K562 (cell line): ENCODE measurements at regions of chr6 and their contacts with region 1.

Region 1: DNA sequence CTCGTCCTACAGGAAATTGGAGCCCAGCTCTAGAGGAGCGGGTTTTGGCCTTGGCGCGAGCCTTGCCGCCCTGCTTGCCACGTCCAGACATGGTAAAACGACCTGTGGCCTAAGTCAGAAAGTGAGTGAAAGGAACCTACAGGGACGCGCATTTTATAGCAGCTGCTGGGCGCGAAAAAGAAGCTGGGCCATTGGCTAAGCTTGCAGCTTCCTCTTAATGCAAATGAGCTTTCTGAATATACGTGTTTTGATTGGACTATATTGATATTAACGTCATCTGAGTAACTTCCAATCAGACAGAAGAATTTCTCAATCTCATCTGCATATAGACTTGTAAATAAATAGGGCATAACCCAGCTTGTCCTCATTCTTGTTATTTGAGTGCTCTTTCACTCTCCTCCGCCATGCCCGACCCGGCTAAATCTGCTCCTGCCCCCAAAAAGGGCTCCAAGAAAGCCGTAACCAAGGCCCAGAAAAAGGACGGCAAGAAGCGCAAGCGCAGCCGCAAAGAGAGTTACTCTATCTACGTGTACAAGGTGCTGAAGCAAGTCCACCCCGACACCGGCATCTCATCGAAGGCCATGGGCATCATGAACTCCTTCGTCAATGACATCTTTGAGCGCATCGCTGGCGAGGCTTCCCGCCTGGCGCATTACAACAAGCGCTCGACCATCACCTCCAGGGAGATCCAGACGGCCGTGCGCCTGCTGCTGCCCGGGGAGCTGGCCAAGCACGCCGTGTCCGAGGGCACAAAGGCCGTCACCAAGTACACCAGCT is 18.9 kb downstream of the OR2B2 start:
- DNase-seq: peak; percentile 84 to 99 (median 92)
- ATAC-seq: peak; percentile 71
- H3K4me3 ChIP-seq: peak overlapping the region; percentile 79
- H3K27ac ChIP-seq: peak overlapping the region; percentile 95
- H3K4me1 ChIP-seq: peaks cover 19 to 38% of the 10 kb centered on the region in 2 experiments
- H3K27me3 ChIP-seq: no peaks in the 10 kb centered on the region
- CTCF ChIP-seq: peak in 1 of 3 experiments; percentile 14; a peak in 1 of 6 replicates
- EP300 ChIP-seq: peak; percentile 62; the same call in 1 of the 2 replicates
- POLR2A ChIP-seq: peak; percentile 100
- RAD21 ChIP-seq: no peak

Region 2: GRCh38 chr6:26122793-26123674 is 1770.2 kb before region 1 on chr6:
- CTCF ChIA-PET with region 1: no interaction called
- POLR2A ChIA-PET with region 1: interaction called, 4 read pairs
- in situ Hi-C with region 1: no loop called
- intact Hi-C with region 1: loop called (anchors 10 kb)
- DNase-seq: peak; percentile 79 to 99 (median 86)
- ATAC-seq: peak; percentile 62
- H3K4me3 ChIP-seq: peak overlapping the region; percentile 72
- H3K27ac ChIP-seq: peak overlapping the region; percentile 95
- H3K4me1 ChIP-seq: peaks cover 3 to 7% of the 10 kb centered on the region in 2 experiments; a peak in 4 of 5 replicates
- H3K27me3 ChIP-seq: no peaks in the 10 kb centered on the region
- CTCF ChIP-seq: peak in 1 of 3 experiments; percentile 23; a peak in 1 of 6 replicates
- EP300 ChIP-seq: peak; percentile 99
- POLR2A ChIP-seq: no peak; the same call in none of the 2 replicates
- RAD21 ChIP-seq: 0 out of 4 replicates have a peak, but pooled peaks of 1 of the 2 experiments have one; percentile 6

Region 3: GRCh38 chr6:27146706-27147505 is 746.3 kb before region 1 on chr6:
- CTCF ChIA-PET with region 1: no interaction called
- POLR2A ChIA-PET with region 1: interaction called, 134 read pairs
- in situ Hi-C with region 1: loop called (anchors 5 kb)
- intact Hi-C with region 1: loop called (anchors 1 kb)
- DNase-seq: peak; percentile 93 to 99 (median 98)
- ATAC-seq: peak; percentile 68
- H3K4me3 ChIP-seq: peak overlapping the region; percentile 71
- H3K27ac ChIP-seq: peak overlapping the region; percentile 94
- H3K4me1 ChIP-seq: peaks cover 4 to 13% of the 10 kb centered on the region in 2 experiments
- H3K27me3 ChIP-seq: no peaks in the 10 kb centered on the region
- CTCF ChIP-seq: no peak
- EP300 ChIP-seq: no peak; the same call in 1 of the 2 replicates
- POLR2A ChIP-seq: peak; percentile 100
- RAD21 ChIP-seq: no peak; a peak in 1 of 4 replicates

Region 4: DNA sequence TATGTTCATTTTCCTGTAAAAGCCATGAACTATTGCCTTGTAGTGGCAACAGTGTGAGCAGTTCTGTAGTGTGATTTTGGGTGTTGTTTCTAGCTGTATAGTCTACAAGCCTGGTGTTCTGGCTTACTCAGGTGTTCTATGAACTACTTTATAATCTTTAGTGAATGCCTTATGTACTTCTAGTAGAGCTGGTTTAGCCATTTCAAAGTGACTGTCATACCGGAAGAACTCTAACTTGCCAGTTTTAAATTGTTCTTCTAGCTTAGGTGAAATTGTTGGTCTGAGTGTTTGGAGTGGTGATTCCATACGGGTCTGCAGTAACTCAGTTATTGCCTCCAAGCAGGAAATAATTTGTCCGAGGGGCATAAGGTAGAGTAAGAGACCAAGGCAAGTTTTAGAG is 270.1 kb before region 1 on chr6:
- CTCF ChIA-PET with region 1: no interaction called
- POLR2A ChIA-PET with region 1: no interaction called
- in situ Hi-C with region 1: no loop called
- intact Hi-C with region 1: no loop called
- DNase-seq: no peak
- ATAC-seq: no peak
- H3K4me3 ChIP-seq: no peak overlapping the region
- H3K27ac ChIP-seq: no peak overlapping the region
- H3K4me1 ChIP-seq: peaks cover 5 to 6% of the 10 kb centered on the region in 2 experiments; a peak in 4 of 5 replicates
- H3K27me3 ChIP-seq: no peaks in the 10 kb centered on the region
- CTCF ChIP-seq: no peak
- EP300 ChIP-seq: no peak
- POLR2A ChIP-seq: no peak
- RAD21 ChIP-seq: no peak

Region 5: GRCh38 chr6:27672113-27672799 is 221.0 kb before region 1 on chr6:
- CTCF ChIA-PET with region 1: interaction called, 4 read pairs
- POLR2A ChIA-PET with region 1: interaction called, 7 read pairs
- in situ Hi-C with region 1: no loop called
- intact Hi-C with region 1: loop called (anchors 5 kb)
- DNase-seq: peak; percentile 59 to 96 (median 70)
- ATAC-seq: peak; percentile 72
- H3K4me3 ChIP-seq: peak overlapping the region; percentile 53
- H3K27ac ChIP-seq: peak overlapping the region; percentile 82
- H3K4me1 ChIP-seq: peaks cover 7% of the 10 kb centered on the region in 2 experiments; a peak in 4 of 5 replicates
- H3K27me3 ChIP-seq: no peaks in the 10 kb centered on the region
- CTCF ChIP-seq: no peak
- EP300 ChIP-seq: peak; percentile 70
- POLR2A ChIP-seq: no peak
- RAD21 ChIP-seq: peak in 1 of 2 experiments; percentile 31; a peak in 2 of 4 replicates

Region 6: DNA sequence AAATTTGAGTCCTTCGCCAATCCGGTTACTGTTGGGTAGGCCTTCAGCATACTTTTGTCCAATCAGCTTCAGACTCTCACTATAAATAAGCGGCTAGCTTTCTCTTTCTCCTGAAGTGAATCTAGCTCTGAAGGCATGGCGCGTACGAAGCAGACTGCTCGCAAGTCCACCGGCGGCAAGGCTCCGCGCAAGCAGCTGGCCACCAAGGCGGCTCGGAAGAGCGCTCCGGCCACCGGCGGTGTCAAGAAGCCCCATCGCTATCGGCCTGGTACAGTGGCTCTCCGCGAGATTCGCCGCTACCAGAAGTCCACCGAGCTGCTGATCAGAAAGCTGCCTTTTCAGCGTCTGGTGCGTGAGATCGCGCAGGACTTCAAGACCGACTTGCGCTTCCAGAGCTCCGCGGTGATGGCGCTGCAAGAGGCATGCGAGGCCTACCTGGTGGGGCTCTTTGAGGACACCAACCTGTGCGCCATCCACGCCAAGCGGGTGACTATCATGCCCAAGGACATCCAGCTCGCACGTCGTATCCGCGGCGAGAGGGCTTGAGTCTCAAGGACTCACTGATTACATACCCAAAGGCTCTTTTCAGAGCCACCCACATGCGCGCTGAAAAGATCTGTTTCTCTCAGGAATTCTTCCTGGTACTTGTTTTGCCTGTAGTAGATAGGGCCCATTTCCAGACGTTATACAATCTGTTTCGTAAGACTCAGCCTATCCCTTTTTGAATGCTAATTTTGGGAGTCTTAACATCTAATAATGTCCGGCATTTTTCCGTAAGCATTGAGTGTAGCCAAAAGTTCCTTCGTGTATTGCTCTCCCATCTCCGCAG is 83.1 kb before region 1 on chr6:
- CTCF ChIA-PET with region 1: no interaction called
- POLR2A ChIA-PET with region 1: interaction called, 481 read pairs
- in situ Hi-C with region 1: loop called (anchors 5 kb)
- intact Hi-C with region 1: loop called (anchors 1 kb)
- DNase-seq: peak; percentile 70 to 96 (median 82)
- ATAC-seq: peak; percentile 60
- H3K4me3 ChIP-seq: peak overlapping the region; percentile 71
- H3K27ac ChIP-seq: peak overlapping the region; percentile 86
- H3K4me1 ChIP-seq: peaks cover 4 to 20% of the 10 kb centered on the region in 2 experiments; a peak in 4 of 5 replicates
- H3K27me3 ChIP-seq: no peaks in the 10 kb centered on the region
- CTCF ChIP-seq: peak in 2 of 3 experiments; percentile 25 to 36; a peak in 3 of 6 replicates
- EP300 ChIP-seq: 0 out of 2 replicates have a peak, but pooled peaks have one; percentile 2
- POLR2A ChIP-seq: peak; percentile 100
- RAD21 ChIP-seq: peak; percentile 10 to 35; a peak in 2 of 4 replicates

Region 7: DNA sequence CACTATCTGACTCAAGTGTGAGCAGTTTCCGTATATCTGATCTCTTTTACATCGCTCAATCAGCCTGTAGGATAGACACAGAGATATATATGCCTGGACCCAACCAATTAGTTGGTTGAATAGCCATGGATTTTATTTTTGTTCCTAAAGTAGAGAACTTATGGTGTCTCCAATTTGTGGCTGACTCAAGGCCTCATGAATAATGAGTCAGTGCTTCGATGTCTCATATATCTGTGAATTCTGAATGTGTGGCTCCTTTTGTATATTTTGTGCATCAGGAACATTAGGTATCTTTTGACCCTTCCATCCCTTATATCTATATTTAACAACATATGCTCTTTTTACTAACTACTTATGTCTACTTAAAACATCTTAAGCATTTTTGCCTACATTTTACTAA is 45.5 kb before region 1 on chr6:
- CTCF ChIA-PET with region 1: no interaction called
- POLR2A ChIA-PET with region 1: interaction called, 29 read pairs
- in situ Hi-C with region 1: no loop called
- intact Hi-C with region 1: no loop called
- DNase-seq: no peak
- ATAC-seq: peak; percentile 9; the same call in 2 of the 3 replicates
- H3K4me3 ChIP-seq: no peak overlapping the region
- H3K27ac ChIP-seq: no peak overlapping the region
- H3K4me1 ChIP-seq: no peaks in the 10 kb centered on the region
- H3K27me3 ChIP-seq: no peaks in the 10 kb centered on the region
- CTCF ChIP-seq: no peak
- EP300 ChIP-seq: no peak
- POLR2A ChIP-seq: 0 out of 2 replicates have a peak, but pooled peaks have one; percentile 17
- RAD21 ChIP-seq: no peak

Region 8: DNA sequence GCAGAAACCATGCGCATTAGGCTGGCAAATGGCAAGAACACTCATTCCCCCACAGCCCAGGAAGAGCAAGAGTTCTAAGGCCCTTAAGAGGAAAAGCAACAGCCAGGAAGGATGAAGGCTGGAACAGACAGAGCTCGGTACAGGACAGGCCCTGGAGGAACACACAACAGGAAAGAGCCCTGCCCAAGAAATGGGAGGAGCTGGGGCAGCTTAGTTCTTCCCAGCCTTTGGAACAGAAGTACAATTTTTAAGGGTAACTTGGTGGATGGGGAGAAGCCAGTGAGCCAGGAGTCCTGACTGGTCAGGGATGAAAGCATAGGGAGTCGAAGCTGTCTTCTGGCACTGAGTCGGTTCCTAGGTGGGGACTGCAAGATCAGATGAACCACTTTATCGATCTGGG is 13.4 kb before region 1 on chr6:
- CTCF ChIA-PET with region 1: no interaction called
- POLR2A ChIA-PET with region 1: interaction called, 306 read pairs
- in situ Hi-C with region 1: no loop called
- intact Hi-C with region 1: no loop called
- DNase-seq: no peak
- ATAC-seq: peak; percentile 65
- H3K4me3 ChIP-seq: no peak overlapping the region
- H3K27ac ChIP-seq: no peak overlapping the region
- H3K4me1 ChIP-seq: peaks cover 3 to 6% of the 10 kb centered on the region in 2 experiments; a peak in 3 of 5 replicates
- H3K27me3 ChIP-seq: no peaks in the 10 kb centered on the region
- CTCF ChIP-seq: no peak
- EP300 ChIP-seq: no peak
- POLR2A ChIP-seq: no peak
- RAD21 ChIP-seq: no peak